ENCODE measurements at regions of chr1 and their contacts with region 1.

Region 1: GRCh38 chr1:171159148-171159547 is 26.0 kb upstream of the FMO2 start:
- DNase-seq: no peak
- H3K4me3 ChIP-seq: no peak overlapping the region
- H3K27ac ChIP-seq: no peak overlapping the region
- H3K4me1 ChIP-seq: no peaks in the 10 kb centered on the region
- H3K27me3 ChIP-seq: no peaks in the 10 kb centered on the region
- CTCF ChIP-seq: no peak

Region 2: GRCh38 chr1:171196351-171196750 is 37.2 kb after region 1 on chr1:
- CTCF ChIA-PET with region 1: no interaction called
- dilution Hi-C with region 1: no loop called
- in situ Hi-C with region 1: no loop called
- intact Hi-C with region 1: loop called (anchors 1 kb)
- DNase-seq: no peak
- H3K4me3 ChIP-seq: no peak overlapping the region
- H3K27ac ChIP-seq: no peak overlapping the region
- H3K4me1 ChIP-seq: peaks cover under 1% of the 10 kb centered on the region
- H3K27me3 ChIP-seq: no peaks in the 10 kb centered on the region
- CTCF ChIP-seq: no peak

Measured in mammary epithelial cell (primary cell).